PC-3 (cell line): ENCODE measurements at regions of chr1 and their contacts with region 1.

Region 1: GRCh38 chr1:203818399-203818798 is 23.0 kb downstream of the ZBED6 start:
- DNase-seq: no peak
- ATAC-seq: no peak
- H3K4me3 ChIP-seq: no peak overlapping the region
- H3K27ac ChIP-seq: no peak overlapping the region
- H3K4me1 ChIP-seq: no peaks in the 10 kb centered on the region
- H3K27me3 ChIP-seq: no peaks in the 10 kb centered on the region
- CTCF ChIP-seq: no peak

Region 2: DNA sequence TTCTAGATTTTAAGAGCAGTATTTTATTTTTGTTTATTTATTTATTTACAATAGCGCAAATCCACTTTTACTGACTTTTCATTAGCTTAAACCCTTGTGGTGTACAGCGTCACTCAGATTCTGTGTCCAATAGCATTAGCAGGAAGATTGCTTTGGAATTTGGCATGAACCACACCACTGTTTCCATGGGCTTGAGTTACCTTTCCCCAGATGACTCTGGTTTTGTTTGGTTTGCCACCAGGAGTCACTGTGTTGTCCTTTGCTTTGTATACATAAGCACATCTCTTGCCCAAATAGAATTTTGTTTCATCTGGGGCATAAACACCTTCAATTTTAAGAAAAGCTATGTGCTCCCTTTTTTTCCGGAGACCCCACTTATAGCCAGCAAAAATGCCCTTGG is 17.1 kb after region 1 on chr1:
- CTCF ChIA-PET with region 1: no interaction called
- POLR2A ChIA-PET with region 1: interaction called, 4 read pairs
- intact Hi-C with region 1: loop called (anchors 2 kb)
- DNase-seq: no peak
- ATAC-seq: no peak
- H3K4me3 ChIP-seq: no peak overlapping the region
- H3K27ac ChIP-seq: no peak overlapping the region
- H3K4me1 ChIP-seq: no peaks in the 10 kb centered on the region
- H3K27me3 ChIP-seq: no peaks in the 10 kb centered on the region
- CTCF ChIP-seq: peak; percentile 47